ENCODE measurements at regions of chr3 and their contacts with region 1.

Region 1: DNA sequence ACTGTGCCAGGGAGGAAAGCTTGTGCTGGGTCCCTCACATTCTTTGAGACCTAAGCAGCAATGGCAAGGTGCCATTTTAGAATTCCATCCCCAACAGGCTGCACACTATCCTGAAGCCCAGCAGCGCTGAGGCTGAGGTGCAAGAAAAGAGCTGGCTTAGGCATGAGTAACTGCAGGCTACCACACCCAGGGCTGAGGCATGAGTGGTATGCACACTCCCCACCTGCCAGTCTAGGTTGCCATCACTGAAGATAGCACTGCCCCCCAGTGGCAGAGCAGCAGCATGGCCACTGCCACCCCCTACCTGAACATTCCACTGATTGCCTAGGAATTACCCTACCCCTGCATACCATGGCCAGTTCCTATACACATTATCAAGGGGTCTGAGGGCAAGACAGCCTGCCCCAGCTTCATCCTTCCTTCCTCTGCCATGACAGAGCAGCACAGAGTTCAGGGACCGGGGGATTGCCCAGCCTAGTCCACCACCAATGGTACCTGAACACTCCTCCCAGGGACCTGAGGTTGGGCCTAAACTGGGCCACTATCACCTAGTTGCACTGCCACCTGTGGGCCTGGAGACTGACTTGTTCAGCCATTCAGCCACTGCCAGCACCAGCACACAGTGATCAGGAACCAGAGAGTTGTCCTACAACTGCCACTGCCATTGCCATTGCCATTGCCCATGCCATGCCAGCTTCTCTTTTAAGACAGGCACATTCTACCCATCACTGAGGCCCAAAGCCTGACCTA is 129.8 kb downstream of the SATB1 start:
- DNase-seq: no peak
- H3K4me3 ChIP-seq: no peak overlapping the region
- H3K27ac ChIP-seq: no peak overlapping the region
- H3K4me1 ChIP-seq: no peaks in the 10 kb centered on the region
- H3K27me3 ChIP-seq: no peaks in the 10 kb centered on the region
- CTCF ChIP-seq: no peak
- POLR2A ChIP-seq: no peak

Region 2: DNA sequence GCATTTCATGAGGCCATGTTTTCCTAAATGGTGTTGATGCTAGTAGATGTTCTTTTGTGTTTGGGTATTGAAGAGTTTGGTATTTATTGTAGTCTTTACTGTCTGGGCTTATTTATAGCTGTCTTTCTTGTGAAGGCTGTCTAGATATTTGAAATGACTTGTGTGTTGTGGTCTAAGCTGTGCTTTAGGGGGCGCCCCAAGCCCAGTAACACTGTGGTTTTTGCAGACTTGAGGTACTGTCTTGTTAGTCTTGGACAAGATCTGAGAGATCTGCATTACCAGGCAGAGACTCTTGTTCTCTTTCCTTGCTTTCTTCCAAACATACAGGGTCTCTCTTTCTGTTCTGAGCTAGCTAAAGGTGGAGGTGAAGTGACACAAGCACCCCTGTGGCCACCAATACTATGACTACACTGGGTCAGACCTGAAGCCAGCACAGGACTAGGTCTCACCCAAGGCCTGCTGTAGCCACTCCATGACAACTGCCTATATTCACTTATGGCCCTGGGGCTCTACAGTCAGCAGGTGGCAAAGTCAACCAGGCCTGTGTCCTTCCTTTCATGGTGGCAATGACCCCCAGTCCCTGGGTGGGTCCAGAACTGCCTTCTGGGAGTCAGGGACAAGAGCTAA is 400.8 kb before region 1 on chr3:
- CTCF ChIA-PET with region 1: no interaction called
- POLR2A ChIA-PET with region 1: no interaction called
- dilution Hi-C with region 1: no loop called
- intact Hi-C with region 1: loop called (anchors 5 kb)
- DNase-seq: no peak
- H3K4me3 ChIP-seq: no peak overlapping the region
- H3K27ac ChIP-seq: no peak overlapping the region
- H3K4me1 ChIP-seq: no peaks in the 10 kb centered on the region
- H3K27me3 ChIP-seq: no peaks in the 10 kb centered on the region
- CTCF ChIP-seq: no peak
- POLR2A ChIP-seq: no peak

Region 3: DNA sequence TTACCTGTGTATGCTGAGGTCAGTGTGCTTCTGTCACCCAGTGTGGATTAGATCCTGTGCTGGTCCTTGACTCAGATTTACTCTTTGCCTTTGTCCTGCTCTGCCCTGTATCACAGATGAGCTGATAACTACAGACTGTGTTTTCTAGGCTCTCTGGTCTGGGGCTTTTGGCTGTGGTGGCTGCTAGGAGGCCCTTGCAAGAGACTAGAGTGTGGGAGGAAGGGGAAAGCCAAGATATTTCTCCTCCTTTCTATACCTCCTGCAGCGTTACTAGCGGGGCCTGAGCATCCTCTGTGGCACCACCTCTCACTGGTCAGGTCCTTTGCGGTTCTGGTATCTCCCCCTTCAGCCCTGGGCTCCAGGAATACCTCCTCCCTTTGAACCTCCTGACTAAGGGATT is 270.6 kb before region 1 on chr3:
- CTCF ChIA-PET with region 1: no interaction called
- POLR2A ChIA-PET with region 1: no interaction called
- dilution Hi-C with region 1: no loop called
- intact Hi-C with region 1: no loop called
- DNase-seq: no peak
- H3K4me3 ChIP-seq: no peak overlapping the region
- H3K27ac ChIP-seq: no peak overlapping the region
- H3K4me1 ChIP-seq: no peaks in the 10 kb centered on the region
- H3K27me3 ChIP-seq: no peaks in the 10 kb centered on the region
- CTCF ChIP-seq: no peak
- POLR2A ChIP-seq: no peak